ENCODE measurements at regions of chr6 and their contacts with region 1.

Region 1: DNA sequence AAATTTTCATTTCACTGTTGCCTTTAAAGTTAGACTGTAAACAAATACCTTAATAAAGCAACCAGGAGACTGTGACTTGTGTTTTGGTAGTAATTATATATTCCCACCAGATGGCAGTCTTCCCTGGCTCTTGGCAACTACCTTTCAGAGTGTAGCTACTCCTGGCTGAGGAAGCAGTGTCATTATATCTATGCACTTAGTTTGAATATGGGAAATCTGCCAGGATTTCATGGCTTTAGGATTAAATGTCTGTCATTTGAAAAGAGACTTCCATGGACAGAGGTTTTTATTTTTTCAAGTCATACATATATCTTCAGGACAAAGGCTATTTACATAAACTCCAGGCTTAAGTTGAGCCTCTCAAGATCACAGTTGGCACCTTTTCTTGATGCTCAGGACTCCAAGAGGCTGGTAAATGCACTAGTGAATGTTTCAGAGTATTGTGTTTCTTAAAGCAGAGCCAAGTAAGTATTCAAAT is 160.1 kb downstream of the C6orf58 start:
- DNase-seq: peak in 7 of 9 donors; percentile 47 to 76 (median 68)
- ATAC-seq: peak; percentile 93
- H3K4me3 ChIP-seq: no peak overlapping the region
- H3K4me3 Mint-ChIP-seq: no peak overlapping the region
- H3K27ac ChIP-seq: no peak overlapping the region
- H3K27ac Mint-ChIP-seq: peak overlapping the region; percentile 5 to 89 (median 53)
- H3K4me1 ChIP-seq: peaks cover 0 to 7% of the 10 kb centered on the region in 2 donors
- H3K4me1 Mint-ChIP-seq: peaks cover 24 to 77% (median 63%) of the 10 kb centered on the region in 7 donors
- H3K27me3 ChIP-seq: no peaks in the 10 kb centered on the region
- H3K27me3 Mint-ChIP-seq: no peaks in the 10 kb centered on the region

Region 2: DNA sequence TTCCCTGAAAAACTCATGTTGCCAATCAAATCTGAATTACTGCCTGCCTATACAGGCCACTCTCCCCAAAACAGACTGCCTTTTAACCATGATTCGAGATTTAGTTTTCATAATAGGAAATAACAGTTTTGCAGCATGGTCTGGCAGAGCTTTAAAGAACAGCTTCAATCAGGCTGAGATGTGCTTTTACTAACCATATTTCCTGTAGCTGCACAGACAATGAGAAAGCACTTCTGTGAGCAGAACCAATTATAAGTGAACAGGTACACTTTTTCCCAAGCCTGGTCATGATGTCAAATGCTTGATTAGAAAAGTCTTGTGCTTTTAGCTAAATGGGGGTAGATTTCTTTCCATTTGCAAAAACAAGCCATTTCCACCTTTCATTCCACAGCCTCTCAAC is 55.6 kb after region 1 on chr6:
- CTCF ChIA-PET with region 1: no interaction called
- POLR2A ChIA-PET with region 1: no interaction called
- intact Hi-C with region 1: loop called in 1 of 2 experiments (anchors 1 kb)
- DNase-seq: peak in 7 of 9 donors; percentile 44 to 70 (median 60)
- ATAC-seq: peak; percentile 83
- H3K4me3 ChIP-seq: peak overlapping the region; percentile 3
- H3K4me3 Mint-ChIP-seq: peak overlapping the region in 8 of 10 donors; percentile 14 to 80 (median 54)
- H3K27ac ChIP-seq: peak overlapping the region; percentile 43
- H3K27ac Mint-ChIP-seq: peak overlapping the region in 8 of 9 donors; percentile 22 to 90 (median 78)
- H3K4me1 ChIP-seq: peaks cover 34 to 43% of the 10 kb centered on the region in 2 donors
- H3K4me1 Mint-ChIP-seq: peaks cover 45 to 100% (median 92%) of the 10 kb centered on the region in 7 donors
- H3K27me3 ChIP-seq: no peaks in the 10 kb centered on the region
- H3K27me3 Mint-ChIP-seq: no peaks in the 10 kb centered on the region

Region 3: DNA sequence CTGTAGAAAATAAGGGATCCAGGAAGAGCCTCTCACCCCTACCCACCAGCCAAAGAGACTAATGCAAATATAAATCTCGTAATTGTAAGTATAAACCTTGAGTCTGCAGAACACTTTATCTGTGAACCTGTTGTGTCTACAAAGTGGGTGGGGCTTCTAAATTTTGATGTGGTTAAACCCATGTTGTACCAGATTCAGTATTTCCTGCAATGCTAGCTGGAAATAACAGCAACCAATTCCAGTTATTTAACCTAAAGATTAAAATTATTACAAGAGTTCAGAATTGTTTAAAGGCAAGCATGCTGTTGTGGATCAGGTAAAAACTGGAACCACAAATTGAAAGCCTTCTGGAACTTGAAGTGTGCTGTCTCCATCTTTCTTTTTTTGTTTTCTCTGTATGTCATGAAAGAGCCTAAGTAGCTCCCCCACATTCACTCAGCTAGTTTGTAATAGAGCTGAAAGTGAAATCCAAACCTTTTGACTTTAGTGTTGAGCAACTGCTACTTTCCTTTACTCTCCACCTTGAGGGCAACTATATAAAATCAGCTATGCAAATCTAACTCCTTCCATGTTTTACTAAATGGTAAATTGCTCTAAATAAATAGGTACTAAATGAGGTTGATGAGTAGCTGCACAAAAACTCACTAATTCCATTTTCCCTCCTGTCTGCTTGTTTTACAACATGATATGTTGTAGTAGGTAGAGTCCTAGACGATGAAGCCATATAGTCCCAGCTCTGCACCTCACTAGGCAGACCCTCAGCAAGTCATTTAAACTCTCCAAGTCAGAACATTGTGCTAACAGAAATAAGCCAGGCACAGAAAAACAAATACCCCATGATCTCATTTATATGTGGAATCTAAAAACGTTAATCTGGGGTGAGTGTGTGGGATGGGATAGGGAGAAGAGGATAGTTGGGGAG is 181.7 kb after region 1 on chr6:
- CTCF ChIA-PET with region 1: interaction called, 3 read pairs
- POLR2A ChIA-PET with region 1: no interaction called
- intact Hi-C with region 1: loop called in 1 of 2 experiments (anchors 1 kb)
- DNase-seq: peak in 7 of 9 donors; percentile 68 to 85 (median 80)
- ATAC-seq: peak; percentile 86
- H3K4me3 ChIP-seq: peak overlapping the region; percentile 79
- H3K4me3 Mint-ChIP-seq: peak overlapping the region; percentile 74 to 96 (median 88)
- H3K27ac ChIP-seq: peak overlapping the region; percentile 50
- H3K27ac Mint-ChIP-seq: peak overlapping the region; percentile 83 to 98 (median 93)
- H3K4me1 ChIP-seq: peaks cover 58 to 65% of the 10 kb centered on the region in 2 donors
- H3K4me1 Mint-ChIP-seq: peaks cover 33 to 95% (median 85%) of the 10 kb centered on the region in 7 donors
- H3K27me3 ChIP-seq: no peaks in the 10 kb centered on the region
- H3K27me3 Mint-ChIP-seq: no peaks in the 10 kb centered on the region

Region 4: GRCh38 chr6:128259730-128260685 is 523.0 kb after region 1 on chr6:
- CTCF ChIA-PET with region 1: no interaction called
- POLR2A ChIA-PET with region 1: no interaction called
- intact Hi-C with region 1: loop called in 1 of 2 experiments (anchors 1 kb)
- DNase-seq: peak in 7 of 9 donors; percentile 11 to 42 (median 29)
- ATAC-seq: peak; percentile 74
- H3K4me3 ChIP-seq: peak overlapping the region; percentile 30
- H3K4me3 Mint-ChIP-seq: peak overlapping the region; percentile 67 to 91 (median 84)
- H3K27ac ChIP-seq: peak overlapping the region; percentile 45
- H3K27ac Mint-ChIP-seq: peak overlapping the region; percentile 74 to 93 (median 90)
- H3K4me1 ChIP-seq: peaks cover 12 to 15% of the 10 kb centered on the region in 2 donors
- H3K4me1 Mint-ChIP-seq: peaks cover 15 to 46% (median 28%) of the 10 kb centered on the region in 7 donors
- H3K27me3 ChIP-seq: no peaks in the 10 kb centered on the region
- H3K27me3 Mint-ChIP-seq: peaks cover 0 to 3% (median 0%) of the 10 kb centered on the region in 5 donors

Region 5: GRCh38 chr6:128520436-128521281 is 783.6 kb after region 1 on chr6 and contains the start of gene PTPRK:
- CTCF ChIA-PET with region 1: interaction called, 6 read pairs
- POLR2A ChIA-PET with region 1: no interaction called
- intact Hi-C with region 1: loop called (anchors 1 kb)
- DNase-seq: peak; percentile 70 to 90 (median 87)
- ATAC-seq: peak; percentile 95
- H3K4me3 ChIP-seq: peak within 1 kb of the TSS; percentile 77
- H3K4me3 Mint-ChIP-seq: peak within 1 kb of the TSS; percentile 90 to 98 (median 94)
- H3K27ac ChIP-seq: peak within 1 kb of the TSS; percentile 59
- H3K27ac Mint-ChIP-seq: peak within 1 kb of the TSS; percentile 73 to 94 (median 82)
- H3K4me1 ChIP-seq: peaks cover 5 to 17% of the 10 kb centered on the region in 2 donors
- H3K4me1 Mint-ChIP-seq: peaks cover 8 to 22% (median 14%) of the 10 kb centered on the region in 7 donors
- H3K27me3 ChIP-seq: no peaks in the 10 kb centered on the region
- H3K27me3 Mint-ChIP-seq: peaks cover 52 to 89% (median 68%) of the 10 kb centered on the region in 5 donors
- total RNA-seq, gene PTPRK: 1.6 to 6.5 (median 3.9) TPM

Region 6: DNA sequence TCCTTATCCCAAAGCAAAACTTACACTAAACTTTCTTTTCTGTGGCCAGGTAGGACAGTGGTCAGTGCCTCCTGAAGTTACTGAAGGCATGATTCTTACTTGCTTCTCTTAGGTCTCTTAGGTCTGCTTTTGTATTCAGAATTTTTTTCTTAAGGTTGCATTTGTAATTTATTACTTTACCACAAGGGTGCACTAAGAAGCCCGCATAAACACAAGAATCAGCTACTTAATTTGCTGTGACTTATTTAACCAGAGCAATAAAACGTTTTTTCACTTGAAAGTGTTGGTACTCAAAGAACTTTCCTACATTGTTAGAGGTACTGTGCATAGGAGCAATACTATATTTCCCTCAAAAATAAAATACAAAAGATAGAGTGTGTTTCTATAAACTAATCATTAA is 1070.5 kb after region 1 on chr6:
- CTCF ChIA-PET with region 1: no interaction called
- POLR2A ChIA-PET with region 1: no interaction called
- intact Hi-C with region 1: loop called in 1 of 2 experiments (anchors 2 kb)
- DNase-seq: no peak
- ATAC-seq: no peak
- H3K4me3 ChIP-seq: no peak overlapping the region
- H3K4me3 Mint-ChIP-seq: no peak overlapping the region
- H3K27ac ChIP-seq: no peak overlapping the region
- H3K27ac Mint-ChIP-seq: no peak overlapping the region
- H3K4me1 ChIP-seq: no peaks in the 10 kb centered on the region
- H3K4me1 Mint-ChIP-seq: peaks cover 0 to 3% (median 0%) of the 10 kb centered on the region in 7 donors
- H3K27me3 ChIP-seq: no peaks in the 10 kb centered on the region
- H3K27me3 Mint-ChIP-seq: peaks cover 0 to 15% (median 8%) of the 10 kb centered on the region in 5 donors

Region 7: GRCh38 chr6:129575378-129576118 is 1838.5 kb after region 1 on chr6:
- CTCF ChIA-PET with region 1: no interaction called
- POLR2A ChIA-PET with region 1: no interaction called
- intact Hi-C with region 1: loop called in 1 of 2 experiments (anchors 10 kb)
- DNase-seq: peak in 5 of 9 donors; percentile 4 to 31 (median 21)
- ATAC-seq: peak; percentile 71
- H3K4me3 ChIP-seq: no peak overlapping the region
- H3K4me3 Mint-ChIP-seq: peak overlapping the region in 9 of 10 donors; percentile 48 to 66 (median 59)
- H3K27ac ChIP-seq: no peak overlapping the region
- H3K27ac Mint-ChIP-seq: peak overlapping the region in 2 of 9 donors; percentile 22 to 41
- H3K4me1 ChIP-seq: peaks cover 0 to 3% of the 10 kb centered on the region in 2 donors
- H3K4me1 Mint-ChIP-seq: peaks cover 0 to 11% (median 8%) of the 10 kb centered on the region in 7 donors
- H3K27me3 ChIP-seq: no peaks in the 10 kb centered on the region
- H3K27me3 Mint-ChIP-seq: peaks cover 0 to 5% (median 0%) of the 10 kb centered on the region in 5 donors

Measured in naive thymus-derived CD4-positive, alpha-beta T cell (primary cell).